ENCODE measurements at regions of chr22 and their contacts with region 1.

Region 1: GRCh38 chr22:33302049-33302545 is 243.9 kb upstream of the SYN3 start:
- DNase-seq: peak; percentile 66
- ATAC-seq: peak; percentile 97
- H3K4me3 ChIP-seq: no peak overlapping the region
- H3K27ac ChIP-seq: peak overlapping the region; percentile 6
- H3K4me1 ChIP-seq: peaks cover 22% of the 10 kb centered on the region
- H3K27me3 ChIP-seq: no peaks in the 10 kb centered on the region
- CTCF ChIP-seq: peak; percentile 99
- EP300 ChIP-seq: no peak; a peak in 1 of 4 replicates
- POLR2A ChIP-seq: no peak
- RAD21 ChIP-seq: peak; percentile 99

Region 2: DNA sequence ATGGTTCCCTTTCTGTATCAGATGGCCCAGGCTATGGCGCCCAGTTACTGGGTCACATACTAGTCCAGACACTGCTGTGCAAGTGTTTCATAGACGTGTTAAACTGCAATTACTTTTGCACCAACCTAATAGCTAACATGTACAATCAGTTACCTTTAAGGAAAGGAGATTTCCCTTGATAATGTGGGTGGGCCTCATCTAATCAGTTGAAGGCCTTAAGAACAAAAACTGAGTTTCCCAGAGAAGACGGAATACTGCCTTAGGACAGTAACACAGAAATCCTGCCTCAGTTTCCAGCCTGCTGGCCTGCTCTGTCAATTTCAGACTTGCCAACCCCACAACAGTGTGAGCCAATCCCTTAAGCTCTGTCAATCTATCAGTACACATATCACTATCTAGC is 14.0 kb before region 1 on chr22:
- CTCF ChIA-PET with region 1: no interaction called
- POLR2A ChIA-PET with region 1: no interaction called
- in situ Hi-C with region 1: no loop called
- intact Hi-C with region 1: no loop called
- DNase-seq: no peak
- ATAC-seq: no peak
- H3K4me3 ChIP-seq: no peak overlapping the region
- H3K27ac ChIP-seq: no peak overlapping the region
- H3K4me1 ChIP-seq: no peaks in the 10 kb centered on the region
- H3K27me3 ChIP-seq: no peaks in the 10 kb centered on the region
- CTCF ChIP-seq: no peak
- EP300 ChIP-seq: no peak
- POLR2A ChIP-seq: no peak
- RAD21 ChIP-seq: no peak

Region 3: DNA sequence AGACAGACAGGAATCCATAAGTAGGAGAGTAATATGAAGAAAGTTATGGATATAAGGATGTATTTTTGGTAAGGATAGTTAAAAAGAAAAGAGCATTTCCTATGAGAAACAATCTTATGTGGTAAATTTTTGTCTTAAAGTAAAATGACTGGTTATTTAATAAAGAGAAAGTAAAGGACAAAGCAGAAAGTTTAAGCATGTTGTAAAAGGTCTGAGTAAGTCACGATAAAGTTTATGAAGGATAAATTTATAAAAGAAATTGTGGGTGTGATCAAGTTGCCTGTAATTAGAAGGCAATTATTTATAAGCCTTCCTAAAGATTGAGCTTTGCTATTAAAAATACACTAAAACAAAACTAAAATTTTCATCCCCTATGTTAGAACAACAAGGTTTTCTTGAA is 70.8 kb after region 1 on chr22:
- CTCF ChIA-PET with region 1: no interaction called
- POLR2A ChIA-PET with region 1: no interaction called
- in situ Hi-C with region 1: no loop called
- intact Hi-C with region 1: no loop called
- DNase-seq: no peak
- ATAC-seq: no peak
- H3K4me3 ChIP-seq: no peak overlapping the region
- H3K27ac ChIP-seq: no peak overlapping the region
- H3K4me1 ChIP-seq: peaks cover 9% of the 10 kb centered on the region
- H3K27me3 ChIP-seq: no peaks in the 10 kb centered on the region
- CTCF ChIP-seq: no peak
- EP300 ChIP-seq: no peak
- POLR2A ChIP-seq: no peak
- RAD21 ChIP-seq: no peak

Region 4: GRCh38 chr22:33476716-33477115 is 174.6 kb after region 1 on chr22:
- CTCF ChIA-PET with region 1: no interaction called
- POLR2A ChIA-PET with region 1: no interaction called
- in situ Hi-C with region 1: no loop called
- intact Hi-C with region 1: loop called (anchors 5 kb)
- DNase-seq: peak; percentile 61
- ATAC-seq: peak; percentile 49
- H3K4me3 ChIP-seq: no peak overlapping the region
- H3K27ac ChIP-seq: peak overlapping the region; percentile 28
- H3K4me1 ChIP-seq: peaks cover 36% of the 10 kb centered on the region
- H3K27me3 ChIP-seq: no peaks in the 10 kb centered on the region
- CTCF ChIP-seq: no peak
- EP300 ChIP-seq: no peak
- POLR2A ChIP-seq: no peak
- RAD21 ChIP-seq: no peak

Region 5: GRCh38 chr22:33519071-33519973 is 217.2 kb after region 1 on chr22:
- CTCF ChIA-PET with region 1: interaction called, 4 read pairs
- POLR2A ChIA-PET with region 1: interaction called, 3 read pairs
- in situ Hi-C with region 1: loop called (anchors 10 kb)
- intact Hi-C with region 1: loop called (anchors 1 kb)
- DNase-seq: peak; percentile 73
- ATAC-seq: peak; percentile 77
- H3K4me3 ChIP-seq: no peak overlapping the region
- H3K27ac ChIP-seq: peak overlapping the region; percentile 51
- H3K4me1 ChIP-seq: peaks cover 91% of the 10 kb centered on the region
- H3K27me3 ChIP-seq: no peaks in the 10 kb centered on the region
- CTCF ChIP-seq: peak; percentile 79
- EP300 ChIP-seq: no peak
- POLR2A ChIP-seq: no peak
- RAD21 ChIP-seq: peak; percentile 90

Region 6: GRCh38 chr22:33579448-33580093 is 277.5 kb after region 1 on chr22:
- CTCF ChIA-PET with region 1: interaction called, 31 read pairs
- POLR2A ChIA-PET with region 1: interaction called, 3 read pairs
- in situ Hi-C with region 1: loop called (anchors 10 kb)
- intact Hi-C with region 1: loop called (anchors 1 kb)
- DNase-seq: peak; percentile 81
- ATAC-seq: peak; percentile 91
- H3K4me3 ChIP-seq: no peak overlapping the region
- H3K27ac ChIP-seq: peak overlapping the region; percentile 90
- H3K4me1 ChIP-seq: peaks cover 54% of the 10 kb centered on the region
- H3K27me3 ChIP-seq: no peaks in the 10 kb centered on the region
- CTCF ChIP-seq: peak; percentile 97
- EP300 ChIP-seq: no peak
- POLR2A ChIP-seq: no peak
- RAD21 ChIP-seq: peak; percentile 97

Region 7: GRCh38 chr22:33909911-33910310 is 607.8 kb after region 1 on chr22:
- CTCF ChIA-PET with region 1: no interaction called
- POLR2A ChIA-PET with region 1: no interaction called
- in situ Hi-C with region 1: loop called (anchors 5 kb)
- intact Hi-C with region 1: no loop called
- DNase-seq: no peak
- ATAC-seq: no peak
- H3K4me3 ChIP-seq: no peak overlapping the region
- H3K27ac ChIP-seq: no peak overlapping the region
- H3K4me1 ChIP-seq: peaks cover 7% of the 10 kb centered on the region; the same call in 1 of the 2 replicates
- H3K27me3 ChIP-seq: no peaks in the 10 kb centered on the region
- CTCF ChIP-seq: no peak
- EP300 ChIP-seq: no peak
- POLR2A ChIP-seq: no peak
- RAD21 ChIP-seq: no peak

Region 8: DNA sequence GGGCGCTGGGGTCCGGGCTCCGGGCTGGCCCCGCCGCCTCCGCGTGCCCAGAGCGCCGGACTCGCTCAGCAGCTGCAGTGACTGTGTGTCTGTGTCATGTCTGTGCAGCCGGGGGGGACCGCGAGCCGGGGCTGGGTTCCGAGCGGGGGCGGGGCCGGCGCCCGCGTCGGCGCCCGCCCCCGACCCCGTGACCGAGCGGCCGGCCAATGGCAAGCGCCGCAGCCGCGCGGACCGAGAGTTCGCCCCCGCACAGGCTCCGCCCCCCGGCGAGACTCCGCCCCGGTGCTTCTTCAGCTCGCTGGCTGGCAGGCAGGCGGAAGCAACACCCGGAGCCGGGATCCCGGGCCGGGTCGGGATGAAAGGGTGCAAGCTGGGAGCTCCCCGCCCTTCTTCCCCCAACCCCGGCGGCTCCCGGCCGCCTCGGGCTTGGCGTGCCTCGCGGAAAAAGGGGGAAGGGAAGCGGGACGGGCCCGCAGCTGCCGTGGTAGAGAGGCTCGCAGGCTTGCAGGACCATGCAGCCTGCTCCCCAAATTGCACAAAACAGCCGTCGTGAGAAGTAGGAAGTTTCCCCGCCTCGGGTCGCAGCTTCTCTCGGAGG is 618.9 kb after region 1 on chr22:
- CTCF ChIA-PET with region 1: no interaction called
- POLR2A ChIA-PET with region 1: no interaction called
- in situ Hi-C with region 1: no loop called
- intact Hi-C with region 1: loop called (anchors 2 kb)
- DNase-seq: peak; percentile 86
- ATAC-seq: peak; percentile 80
- H3K4me3 ChIP-seq: peak overlapping the region; percentile 55 to 77 (median 70)
- H3K27ac ChIP-seq: no peak overlapping the region
- H3K4me1 ChIP-seq: peaks cover 56% of the 10 kb centered on the region
- H3K27me3 ChIP-seq: peaks cover 3 to 23% of the 10 kb centered on the region in 2 experiments; a peak in 3 of 5 replicates
- CTCF ChIP-seq: 0 out of 2 replicates have a peak, but pooled peaks have one; percentile 7
- EP300 ChIP-seq: no peak
- POLR2A ChIP-seq: peak; percentile 49 to 87
- RAD21 ChIP-seq: peak; percentile 26; the same call in 1 of the 2 replicates

Region 9: DNA sequence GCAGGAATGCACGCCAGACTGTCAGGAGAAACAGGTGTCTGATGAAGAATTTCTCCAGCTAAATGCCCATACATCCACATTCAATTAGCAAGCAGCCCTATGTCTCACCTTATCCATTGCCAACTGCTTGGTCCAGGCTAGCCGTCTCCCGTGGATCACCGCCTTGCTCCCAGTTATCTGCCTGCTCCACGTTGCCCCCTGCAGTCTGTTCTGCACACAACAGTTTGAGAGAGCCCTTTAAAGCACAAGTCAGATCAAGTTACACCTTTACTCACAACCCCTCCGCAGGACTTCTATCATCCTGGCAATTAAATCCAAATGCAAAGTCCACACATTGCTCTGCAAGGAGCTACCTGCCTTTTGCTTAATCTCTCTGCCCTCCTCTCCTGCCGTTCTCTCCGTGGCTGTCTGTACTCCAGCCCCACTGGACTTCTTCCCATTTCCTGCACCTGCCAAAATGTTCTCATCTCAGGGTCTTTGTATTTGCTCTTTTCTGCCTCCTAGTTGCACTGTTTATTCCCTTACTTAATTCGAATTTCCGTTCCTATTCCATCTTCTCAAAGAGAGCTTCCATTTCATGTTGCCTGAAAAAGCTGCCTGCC is 803.5 kb after region 1 on chr22:
- CTCF ChIA-PET with region 1: no interaction called
- POLR2A ChIA-PET with region 1: no interaction called
- in situ Hi-C with region 1: no loop called
- intact Hi-C with region 1: loop called (anchors 2 kb)
- DNase-seq: peak; percentile 31
- ATAC-seq: peak; percentile 76
- H3K4me3 ChIP-seq: no peak overlapping the region
- H3K27ac ChIP-seq: no peak overlapping the region
- H3K4me1 ChIP-seq: no peaks in the 10 kb centered on the region
- H3K27me3 ChIP-seq: peaks cover 0 to 4% of the 10 kb centered on the region in 2 experiments; a peak in 2 of 5 replicates
- CTCF ChIP-seq: peak; percentile 81
- EP300 ChIP-seq: no peak
- POLR2A ChIP-seq: no peak
- RAD21 ChIP-seq: no peak

Measured in HepG2 (cell line).